CD8-positive, alpha-beta T cell (primary cell): ENCODE measurements at regions of chr4 and their contacts with region 1.

Region 1: GRCh38 chr4:171532968-171533367 is 280.2 kb upstream of the GALNTL6 start:
- DNase-seq: no peak
- ATAC-seq: no peak
- H3K4me3 ChIP-seq: no peak overlapping the region
- H3K4me3 Mint-ChIP-seq: no peak overlapping the region
- H3K27ac ChIP-seq: no peak overlapping the region
- H3K27ac Mint-ChIP-seq: no peak overlapping the region
- H3K4me1 ChIP-seq: no peaks in the 10 kb centered on the region
- H3K4me1 Mint-ChIP-seq: no peaks in the 10 kb centered on the region
- H3K27me3 ChIP-seq: no peaks in the 10 kb centered on the region
- H3K27me3 Mint-ChIP-seq: no peaks in the 10 kb centered on the region
- CTCF ChIP-seq: no peak

Region 2: GRCh38 chr4:172619798-172620197 is 1086.8 kb after region 1 on chr4:
- CTCF ChIA-PET with region 1: no interaction called
- POLR2A ChIA-PET with region 1: no interaction called
- intact Hi-C with region 1: loop called in 1 of 2 experiments (anchors 5 kb)
- DNase-seq: no peak
- ATAC-seq: no peak
- H3K4me3 ChIP-seq: no peak overlapping the region
- H3K4me3 Mint-ChIP-seq: no peak overlapping the region
- H3K27ac ChIP-seq: no peak overlapping the region
- H3K27ac Mint-ChIP-seq: no peak overlapping the region
- H3K4me1 ChIP-seq: no peaks in the 10 kb centered on the region
- H3K4me1 Mint-ChIP-seq: no peaks in the 10 kb centered on the region
- H3K27me3 ChIP-seq: no peaks in the 10 kb centered on the region
- H3K27me3 Mint-ChIP-seq: no peaks in the 10 kb centered on the region
- CTCF ChIP-seq: no peak